Transverse colon (tissue), 4 donors: ENCODE measurements at regions of chr16 and their contacts with region 1.

Region 1: GRCh38 chr16:69796351-69797118 is 34.4 kb downstream of the WWP2 start:
- DNase-seq: peak; percentile 25
- H3K4me3 ChIP-seq: no peak overlapping the region
- H3K27ac ChIP-seq: no peak overlapping the region
- H3K4me1 ChIP-seq: no peaks in the 10 kb centered on the region
- H3K27me3 ChIP-seq: no peaks in the 10 kb centered on the region
- CTCF ChIP-seq: peak; percentile 84 to 92 (median 91)
- EP300 ChIP-seq: no peak
- POLR2A ChIP-seq: no peak

Region 2: GRCh38 chr16:69727916-69728270 is 68.6 kb before region 1 on chr16:
- in situ Hi-C with region 1: no loop called
- intact Hi-C with region 1: no loop called
- DNase-seq: no peak
- H3K4me3 ChIP-seq: no peak overlapping the region
- H3K27ac ChIP-seq: peak overlapping the region; percentile 90 to 92 (median 90)
- H3K4me1 ChIP-seq: peaks cover 0 to 42% (median 40%) of the 10 kb centered on the region in 4 donors
- H3K27me3 ChIP-seq: no peaks in the 10 kb centered on the region
- CTCF ChIP-seq: no peak
- EP300 ChIP-seq: no peak
- POLR2A ChIP-seq: no peak

Region 3: GRCh38 chr16:69924777-69925191 is 128.2 kb after region 1 on chr16:
- in situ Hi-C with region 1: loop called in 3 of 4 experiments (anchors 5 to 10 kb)
- intact Hi-C with region 1: loop called (anchors 2 kb)
- DNase-seq: no peak
- H3K4me3 ChIP-seq: no peak overlapping the region
- H3K27ac ChIP-seq: peak overlapping the region; percentile 17 to 75 (median 57)
- H3K4me1 ChIP-seq: peaks cover 0 to 8% (median 0%) of the 10 kb centered on the region in 4 donors
- H3K27me3 ChIP-seq: no peaks in the 10 kb centered on the region
- CTCF ChIP-seq: no peak
- EP300 ChIP-seq: no peak
- POLR2A ChIP-seq: no peak

Region 4: DNA sequence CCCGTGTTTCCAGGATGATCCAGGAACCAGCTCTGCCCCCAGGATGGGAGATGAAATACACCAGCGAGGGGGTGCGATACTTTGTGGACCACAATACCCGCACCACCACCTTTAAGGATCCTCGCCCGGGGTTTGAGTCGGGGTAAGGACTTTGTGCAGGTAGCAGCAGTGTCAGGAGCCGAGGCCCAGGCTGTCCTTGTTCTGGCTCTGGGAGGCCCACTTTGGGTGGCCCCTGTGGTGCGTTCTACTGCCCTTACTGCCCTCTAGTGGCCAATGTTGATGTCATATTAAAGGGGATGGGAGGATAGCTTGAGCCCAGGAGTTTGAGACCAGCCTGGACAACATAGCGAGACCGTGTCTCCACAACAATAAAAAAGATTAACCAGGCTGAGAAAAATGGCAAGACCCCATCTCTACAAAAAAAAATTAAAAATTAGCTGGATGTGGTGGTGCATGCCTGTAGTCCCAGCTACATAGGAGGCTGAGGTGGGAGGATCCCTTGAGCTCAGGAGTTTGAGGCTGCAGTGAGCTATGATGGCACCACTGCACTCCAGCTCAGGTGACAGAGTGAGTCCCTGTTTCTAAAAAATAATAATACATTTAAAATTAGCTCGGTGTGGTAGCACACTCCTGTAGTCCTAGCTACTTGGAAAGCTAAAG is 133.7 kb after region 1 on chr16:
- in situ Hi-C with region 1: loop called (anchors 5 to 10 kb)
- intact Hi-C with region 1: loop called (anchors 2 kb)
- DNase-seq: peak; percentile 43
- H3K4me3 ChIP-seq: no peak overlapping the region
- H3K27ac ChIP-seq: no peak overlapping the region
- H3K4me1 ChIP-seq: peaks cover 0 to 2% (median 0%) of the 10 kb centered on the region in 4 donors
- H3K27me3 ChIP-seq: no peaks in the 10 kb centered on the region
- CTCF ChIP-seq: peak; percentile 68 to 82 (median 75)
- EP300 ChIP-seq: no peak
- POLR2A ChIP-seq: no peak